Lower leg skin (tissue), 4 donors: ENCODE measurements at regions of chr14 and their contacts with region 1.

Region 1: GRCh38 chr14:23903442-23903841 is 50.1 kb upstream of the DHRS4 start:
- DNase-seq: no peak
- H3K4me3 ChIP-seq: no peak overlapping the region
- CTCF ChIP-seq: no peak
- POLR2A ChIP-seq: no peak

Region 2: DNA sequence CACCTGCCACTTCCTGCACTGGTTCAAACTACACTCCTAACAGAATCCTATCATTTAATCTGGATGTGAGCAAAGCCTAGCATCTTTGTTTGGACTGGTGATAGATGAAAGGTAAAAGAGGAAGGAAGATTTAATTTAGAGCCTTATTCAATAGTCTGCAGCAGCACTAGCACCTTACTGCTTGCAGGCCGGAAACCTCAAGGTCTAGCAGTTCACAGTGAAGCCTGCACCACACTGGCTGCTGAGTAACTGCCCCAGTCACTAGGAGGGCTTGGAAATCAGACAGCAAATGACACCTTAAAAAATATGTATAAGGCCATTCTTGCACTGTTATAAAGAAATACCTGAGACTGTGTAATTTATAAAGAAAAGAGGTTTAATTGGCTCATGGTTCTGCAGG is 1672.4 kb before region 1 on chr14:
- intact Hi-C with region 1: loop called (anchors 10 kb)
- DNase-seq: no peak
- H3K4me3 ChIP-seq: no peak overlapping the region
- CTCF ChIP-seq: no peak
- POLR2A ChIP-seq: no peak

Region 3: GRCh38 chr14:23665375-23666192 is 237.9 kb before region 1 on chr14:
- intact Hi-C with region 1: loop called (anchors 10 kb)
- DNase-seq: no peak
- H3K4me3 ChIP-seq: no peak overlapping the region
- CTCF ChIP-seq: no peak
- POLR2A ChIP-seq: no peak